ENCODE measurements at regions of chr1 and their contacts with region 1.

Region 1: GRCh38 chr1:246931549-246932365 is at the start of gene AHCTF1:
- DNase-seq: peak; percentile 98
- H3K4me3 Mint-ChIP-seq: peak within 1 kb of the TSS; percentile 94
- H3K27ac Mint-ChIP-seq: peak within 1 kb of the TSS; percentile 96
- H3K4me1 Mint-ChIP-seq: peaks cover 22% of the 10 kb centered on the region
- H3K27me3 Mint-ChIP-seq: peaks cover 4% of the 10 kb centered on the region
- total RNA-seq, gene AHCTF1: 47.9 and 56.5 TPM in 2 replicates

Region 2: DNA sequence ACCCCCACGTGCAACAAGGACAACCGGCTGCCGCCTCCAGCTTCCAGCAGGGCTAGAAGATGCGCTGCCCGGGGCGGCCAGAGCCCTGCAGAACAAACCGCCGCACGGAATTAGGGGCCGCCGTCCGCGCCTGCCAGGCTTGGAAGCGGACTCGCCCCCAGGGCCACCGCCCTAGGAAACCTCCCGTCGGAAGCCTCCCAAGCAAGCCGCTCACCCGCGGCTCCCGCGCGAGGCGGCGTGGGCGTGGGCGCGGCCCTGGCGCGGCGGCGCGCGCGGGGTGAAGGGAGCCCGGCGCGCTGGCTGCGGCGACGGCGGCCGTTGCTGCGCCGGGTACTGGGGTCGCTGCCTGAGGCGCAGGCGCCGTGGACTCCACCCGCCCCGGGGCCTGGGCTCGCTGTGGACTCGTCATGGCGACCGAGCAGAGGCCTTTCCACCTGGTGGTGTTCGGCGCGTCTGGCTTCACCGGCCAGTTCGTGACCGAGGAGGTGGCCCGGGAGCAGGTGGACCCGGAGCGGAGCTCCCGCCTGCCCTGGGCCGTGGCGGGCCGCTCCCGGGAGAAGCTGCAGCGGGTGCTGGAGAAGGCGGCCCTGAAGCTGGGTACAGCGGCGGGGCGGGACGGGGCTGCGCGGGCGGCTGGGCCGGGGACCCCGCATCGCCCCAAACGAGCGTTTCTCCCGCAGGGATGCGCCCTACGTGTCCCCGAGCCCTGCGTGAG is 207.6 kb before region 1 on chr1 and contains the start of gene SCCPDH:
- intact Hi-C with region 1: loop called (anchors 1 kb)
- DNase-seq: peak; percentile 91
- H3K4me3 Mint-ChIP-seq: peak within 1 kb of the TSS; percentile 91
- H3K27ac Mint-ChIP-seq: peak within 1 kb of the TSS; percentile 84
- H3K4me1 Mint-ChIP-seq: peaks cover 5% of the 10 kb centered on the region
- H3K27me3 Mint-ChIP-seq: no peaks in the 10 kb centered on the region
- total RNA-seq, gene SCCPDH: 31.7 and 32.3 TPM in 2 replicates

Region 3: GRCh38 chr1:247060771-247061170 is 129.0 kb after region 1 on chr1:
- intact Hi-C with region 1: no loop called
- DNase-seq: no peak
- H3K4me3 Mint-ChIP-seq: no peak overlapping the region
- H3K27ac Mint-ChIP-seq: no peak overlapping the region
- H3K4me1 Mint-ChIP-seq: no peaks in the 10 kb centered on the region
- H3K27me3 Mint-ChIP-seq: no peaks in the 10 kb centered on the region

Region 4: GRCh38 chr1:247078261-247079140 is 146.7 kb after region 1 on chr1 and contains the start of gene ZNF670:
- intact Hi-C with region 1: loop called (anchors 2 kb)
- DNase-seq: peak; percentile 96
- H3K4me3 Mint-ChIP-seq: peak within 1 kb of the TSS; percentile 94
- H3K27ac Mint-ChIP-seq: peak within 1 kb of the TSS; percentile 85
- H3K4me1 Mint-ChIP-seq: peaks cover 12% of the 10 kb centered on the region
- H3K27me3 Mint-ChIP-seq: peaks cover 7% of the 10 kb centered on the region
- total RNA-seq, gene ZNF670: 2.8 TPM in 2 replicates

Region 5: DNA sequence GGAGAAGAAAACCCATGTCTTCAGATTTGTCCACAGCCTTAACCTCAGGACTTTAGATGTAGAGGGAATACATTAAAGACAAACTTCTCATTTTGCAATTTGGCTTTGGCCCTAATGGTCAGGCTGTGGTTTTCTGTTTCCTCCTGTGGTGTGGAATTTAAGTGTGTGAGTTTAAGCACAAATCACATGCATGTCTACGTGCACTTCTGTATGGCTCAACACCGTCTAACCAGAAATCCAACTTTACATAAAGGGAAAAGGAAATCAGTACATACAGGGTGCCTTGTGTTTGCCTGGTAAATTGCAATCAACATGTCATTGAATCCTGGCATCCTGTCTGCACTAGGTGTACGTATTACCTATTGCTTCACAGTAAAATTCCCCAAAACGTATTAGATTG is 241.2 kb after region 1 on chr1:
- intact Hi-C with region 1: loop called (anchors 10 kb)
- DNase-seq: no peak
- H3K4me3 Mint-ChIP-seq: no peak overlapping the region
- H3K27ac Mint-ChIP-seq: no peak overlapping the region
- H3K4me1 Mint-ChIP-seq: peaks cover 5% of the 10 kb centered on the region
- H3K27me3 Mint-ChIP-seq: no peaks in the 10 kb centered on the region

Region 6: GRCh38 chr1:247331172-247331991 is 399.6 kb after region 1 on chr1 and contains the start of gene ZNF496:
- intact Hi-C with region 1: loop called (anchors 5 kb)
- DNase-seq: peak; percentile 92
- H3K4me3 Mint-ChIP-seq: peak within 1 kb of the TSS; percentile 92
- H3K27ac Mint-ChIP-seq: peak within 1 kb of the TSS; percentile 88
- H3K4me1 Mint-ChIP-seq: peaks cover 16% of the 10 kb centered on the region
- H3K27me3 Mint-ChIP-seq: peaks cover 2% of the 10 kb centered on the region
- total RNA-seq, gene ZNF496: 14.2 and 15.7 TPM in 2 replicates

Measured in activated CD4-positive, alpha-beta T cell treated with anti-CD3 and anti-CD28 coated beads, Interleukin-2, amount 10 ng/mL, durations not matched to agents 24 days and 14 days (primary cell).